ENCODE measurements at regions of chr15 and their contacts with region 1.

Region 1: DNA sequence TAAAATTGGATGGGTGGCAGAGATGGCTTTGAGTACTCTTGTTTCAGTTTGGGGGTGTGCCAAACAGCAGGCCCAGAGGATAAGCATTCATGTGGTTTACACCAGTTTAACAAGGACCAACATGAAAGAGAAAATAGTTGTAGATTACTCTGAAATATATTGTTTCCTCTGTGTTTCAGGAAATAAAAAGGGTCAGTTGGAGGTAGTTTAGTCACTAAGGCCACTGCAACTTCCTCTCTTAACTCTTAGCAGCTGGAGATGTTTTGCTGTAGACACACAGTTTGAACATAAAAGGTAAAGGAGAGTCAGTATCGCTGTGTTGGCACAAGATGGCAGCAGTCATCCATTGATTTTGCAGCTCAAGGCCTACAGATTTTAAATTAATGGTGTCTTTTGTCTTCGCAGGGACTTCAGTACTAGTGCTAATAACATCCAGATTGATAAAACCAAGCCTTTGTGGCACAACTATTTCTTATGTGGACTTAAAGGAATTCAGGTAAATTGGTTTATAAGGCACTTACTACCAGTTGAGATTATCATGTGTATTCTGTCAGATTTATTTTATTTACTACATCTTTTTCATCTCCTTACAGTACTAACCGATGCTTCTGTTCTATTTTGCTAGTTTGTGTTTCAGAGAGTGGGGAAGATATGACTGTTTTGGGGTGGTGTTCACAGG is 65.5 kb downstream of the GALK2 start:
- DNase-seq: peak; percentile 60
- ATAC-seq: peak; percentile 80
- H3K4me3 Mint-ChIP-seq: no peak overlapping the region
- H3K27ac Mint-ChIP-seq: no peak overlapping the region
- H3K4me1 Mint-ChIP-seq: peaks cover 4% of the 10 kb centered on the region
- H3K27me3 Mint-ChIP-seq: no peaks in the 10 kb centered on the region

Region 2: DNA sequence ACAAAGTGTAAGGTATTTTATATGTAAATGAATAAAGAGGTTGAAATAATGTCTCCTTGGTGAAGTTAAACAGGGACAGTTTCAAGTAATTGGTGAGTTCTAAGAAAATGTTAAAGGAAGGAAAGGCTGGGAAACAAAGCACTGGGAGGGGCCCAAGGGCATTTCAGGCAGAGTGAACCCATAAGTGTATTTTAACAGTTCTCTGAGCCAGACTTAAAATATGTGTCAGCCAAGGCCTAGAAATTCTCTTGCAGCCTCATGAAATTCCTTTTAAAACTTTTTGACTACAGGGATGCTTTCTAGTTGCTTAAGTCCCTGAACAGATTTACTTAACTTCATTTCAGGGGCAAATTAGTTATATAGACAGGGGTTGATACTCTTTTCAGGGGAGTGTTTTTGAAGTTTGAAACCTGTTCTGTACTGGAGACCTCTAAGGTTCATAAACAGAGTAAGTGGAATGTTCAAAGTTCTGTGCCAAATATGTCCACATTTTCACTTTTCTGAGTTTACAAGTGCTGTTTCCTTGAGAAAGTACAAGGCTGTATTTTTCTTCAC is 12.0 kb after region 1 on chr15:
- CTCF ChIA-PET with region 1: interaction called, 13 read pairs
- POLR2A ChIA-PET with region 1: no interaction called
- intact Hi-C with region 1: no loop called
- DNase-seq: no peak
- ATAC-seq: no peak
- H3K4me3 Mint-ChIP-seq: no peak overlapping the region
- H3K27ac Mint-ChIP-seq: no peak overlapping the region
- H3K4me1 Mint-ChIP-seq: no peaks in the 10 kb centered on the region
- H3K27me3 Mint-ChIP-seq: no peaks in the 10 kb centered on the region

Region 3: DNA sequence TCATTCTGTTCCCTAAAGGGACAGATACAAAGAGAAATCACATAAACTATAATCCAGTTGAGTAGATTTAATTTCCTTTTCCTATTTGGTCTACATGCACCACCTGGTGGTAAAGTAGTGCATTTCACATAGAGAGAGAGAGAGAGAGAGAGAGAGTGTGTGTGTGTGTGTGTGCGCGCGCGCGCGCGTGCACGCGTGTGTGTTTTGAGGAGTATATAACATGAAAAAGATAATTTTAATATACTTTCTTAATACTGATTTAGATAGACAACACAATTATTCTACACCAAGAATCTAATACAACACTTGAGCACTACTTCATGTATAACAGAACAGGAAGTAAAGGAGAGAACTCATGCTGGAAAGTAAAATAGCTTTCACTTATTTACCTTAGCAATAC is 186.4 kb after region 1 on chr15:
- CTCF ChIA-PET with region 1: interaction called, 33 read pairs
- POLR2A ChIA-PET with region 1: no interaction called
- intact Hi-C with region 1: loop called (anchors 1 kb)
- DNase-seq: peak; percentile 51
- ATAC-seq: peak; percentile 26
- H3K4me3 Mint-ChIP-seq: no peak overlapping the region
- H3K27ac Mint-ChIP-seq: no peak overlapping the region
- H3K4me1 Mint-ChIP-seq: peaks cover 4% of the 10 kb centered on the region
- H3K27me3 Mint-ChIP-seq: no peaks in the 10 kb centered on the region

Region 4: DNA sequence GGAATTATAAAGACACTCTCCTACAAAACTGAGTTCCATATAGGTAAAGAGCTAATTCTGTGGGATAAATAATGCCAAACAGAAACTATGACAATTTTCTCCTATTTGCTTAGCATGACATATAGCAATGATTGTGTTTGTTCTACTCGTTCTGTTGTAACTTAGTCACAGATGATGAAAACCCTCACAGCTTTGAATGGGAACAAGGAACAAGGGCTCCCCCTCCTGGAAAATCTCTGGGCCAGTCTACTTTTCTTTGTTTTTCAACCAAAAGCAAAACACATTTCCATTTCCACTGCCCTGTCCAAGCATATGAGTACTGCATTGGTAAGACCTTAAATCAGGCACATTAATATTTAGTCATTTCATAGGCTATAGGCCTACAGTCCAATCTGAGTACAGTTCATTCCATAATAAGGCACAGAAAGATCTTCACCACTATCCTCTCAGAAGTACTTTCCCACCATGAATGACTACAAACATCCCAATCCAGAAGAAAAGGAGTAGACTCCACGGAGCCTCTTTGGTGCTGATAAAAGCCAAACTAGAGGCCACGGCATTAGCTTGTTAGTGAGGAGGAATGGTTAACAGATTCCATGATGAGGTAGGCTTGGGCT is 816.3 kb after region 1 on chr15:
- CTCF ChIA-PET with region 1: interaction called, 5 read pairs
- POLR2A ChIA-PET with region 1: no interaction called
- intact Hi-C with region 1: loop called in 1 of 2 experiments (anchors 1 kb)
- DNase-seq: peak; percentile 58
- ATAC-seq: peak; percentile 74
- H3K4me3 Mint-ChIP-seq: no peak overlapping the region
- H3K27ac Mint-ChIP-seq: no peak overlapping the region
- H3K4me1 Mint-ChIP-seq: peaks cover 10% of the 10 kb centered on the region
- H3K27me3 Mint-ChIP-seq: peaks cover 11% of the 10 kb centered on the region

Measured in activated CD4-positive, alpha-beta T cell treated with anti-CD3 and anti-CD28 coated beads for 36 hours (primary cell).